Left ventricle myocardium inferior (tissue), 1 donor: ENCODE measurements at regions of chr17 and their contacts with region 1.

Region 1: DNA sequence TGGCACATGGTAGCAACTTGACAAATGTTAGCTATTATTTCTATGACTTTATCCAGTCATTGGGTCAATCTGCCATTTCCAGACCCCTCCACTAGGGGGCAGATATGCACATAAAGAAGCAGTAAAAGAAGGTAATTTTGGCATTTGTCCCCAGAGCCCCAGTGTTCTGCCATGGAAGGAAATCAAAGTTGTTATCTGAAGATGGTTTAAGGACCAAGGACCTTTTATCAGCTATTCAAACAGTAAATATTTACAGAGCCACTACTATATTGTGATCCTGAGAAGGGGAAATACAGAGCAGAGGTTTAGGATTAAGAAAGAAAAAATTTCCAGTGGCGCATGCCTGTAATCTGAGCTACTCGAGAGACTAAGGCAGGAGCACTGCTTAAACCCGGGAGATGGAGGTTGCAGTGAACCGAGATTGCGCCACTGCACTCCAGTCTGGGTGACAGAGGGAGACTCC is 20.0 kb downstream of the TRAF4 start:
- DNase-seq: peak; percentile 60
- H3K4me3 ChIP-seq: no peak overlapping the region
- H3K27ac ChIP-seq: no peak overlapping the region
- H3K4me1 ChIP-seq: peaks cover 29% of the 10 kb centered on the region
- H3K27me3 ChIP-seq: no peaks in the 10 kb centered on the region
- CTCF ChIP-seq: peak; percentile 89

Region 2: DNA sequence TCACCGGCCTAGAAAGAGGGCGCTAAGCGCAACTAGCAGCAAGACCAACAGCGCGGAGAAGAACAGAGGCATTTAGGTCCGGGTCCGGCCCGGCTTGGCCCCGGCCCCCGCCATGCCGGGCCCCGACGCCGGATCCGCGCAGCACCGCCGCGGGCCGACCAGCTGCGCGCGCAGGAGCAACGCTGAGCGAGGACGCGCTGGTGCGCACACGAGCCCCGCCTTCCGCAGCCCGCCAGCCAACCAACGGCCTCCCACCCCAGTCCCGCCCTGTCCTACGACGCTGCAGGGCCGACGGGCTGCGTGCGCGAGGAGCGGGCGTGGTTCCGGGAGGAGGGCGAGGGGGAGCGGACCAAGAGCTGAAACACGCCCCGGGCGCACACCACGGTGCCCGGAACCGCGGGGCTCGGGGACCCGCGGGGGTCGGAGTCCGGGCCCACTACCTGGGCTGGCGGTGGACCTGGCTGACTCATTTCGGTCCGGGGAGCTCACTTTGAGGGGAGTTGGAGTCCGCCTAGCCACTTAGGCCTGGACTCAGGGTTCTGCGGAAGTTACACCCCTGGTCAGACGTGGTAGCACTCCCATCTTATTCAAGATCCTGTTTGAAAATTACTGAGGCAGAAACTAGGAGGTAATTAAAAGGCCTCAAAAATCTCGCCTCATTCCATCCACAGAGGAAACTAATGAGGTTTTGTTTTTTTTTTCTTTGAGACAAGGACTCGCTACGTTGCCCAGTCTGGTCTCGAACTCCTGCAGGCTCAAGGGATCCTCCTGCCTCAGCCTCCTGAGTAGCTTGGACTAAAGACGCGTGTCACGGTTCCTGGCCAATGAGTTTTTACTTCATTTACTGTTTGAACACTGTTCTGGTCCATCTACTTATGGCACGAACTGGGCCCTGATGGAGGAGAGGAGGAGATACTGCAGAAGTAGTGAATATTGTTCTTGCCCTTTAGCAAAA is 118.6 kb before region 1 on chr17 and contains the start of gene BLTP2:
- intact Hi-C with region 1: no loop called
- DNase-seq: peak; percentile 97
- H3K4me3 ChIP-seq: peak within 1 kb of the TSS; percentile 87
- H3K27ac ChIP-seq: peak within 1 kb of the TSS; percentile 97
- H3K4me1 ChIP-seq: peaks cover 68% of the 10 kb centered on the region
- H3K27me3 ChIP-seq: no peaks in the 10 kb centered on the region
- CTCF ChIP-seq: no peak
- total RNA-seq, gene BLTP2: 71.3 TPM

Region 3: DNA sequence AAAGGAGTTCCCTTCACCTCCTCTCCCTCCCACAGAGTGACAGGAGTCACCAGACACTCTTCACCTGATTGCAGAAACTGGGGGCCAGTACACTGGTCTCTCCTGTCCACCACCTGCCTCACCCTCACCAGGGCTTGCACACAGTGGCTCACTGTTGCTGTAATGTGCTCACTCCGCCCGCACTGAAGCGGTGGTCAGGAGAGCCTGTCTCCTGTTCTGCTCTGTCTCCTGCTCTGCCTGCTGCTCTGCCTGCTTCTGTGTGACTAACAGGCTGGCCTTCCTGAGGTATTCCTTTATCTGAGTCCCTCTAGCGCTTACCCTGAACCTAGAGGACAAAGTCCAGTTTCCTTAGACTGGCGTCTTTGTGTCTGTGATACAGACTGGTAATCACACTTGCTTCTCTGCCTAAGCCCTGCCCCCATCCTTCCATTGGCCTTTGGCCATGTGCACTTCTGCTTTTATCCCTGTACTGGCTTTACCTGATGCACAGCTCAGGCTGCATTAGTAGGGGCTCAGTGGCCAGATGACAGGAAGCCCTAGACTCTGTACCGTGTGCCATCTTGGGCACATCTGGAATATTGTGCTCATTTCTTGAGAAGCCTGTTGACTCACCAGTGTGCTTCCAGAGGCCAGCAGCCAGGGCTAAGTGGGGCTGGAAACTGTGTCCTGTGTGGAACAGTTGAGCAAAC is 65.4 kb before region 1 on chr17:
- intact Hi-C with region 1: no loop called
- DNase-seq: no peak
- H3K4me3 ChIP-seq: no peak overlapping the region
- H3K27ac ChIP-seq: no peak overlapping the region
- H3K4me1 ChIP-seq: no peaks in the 10 kb centered on the region
- H3K27me3 ChIP-seq: no peaks in the 10 kb centered on the region
- CTCF ChIP-seq: no peak

Region 4: DNA sequence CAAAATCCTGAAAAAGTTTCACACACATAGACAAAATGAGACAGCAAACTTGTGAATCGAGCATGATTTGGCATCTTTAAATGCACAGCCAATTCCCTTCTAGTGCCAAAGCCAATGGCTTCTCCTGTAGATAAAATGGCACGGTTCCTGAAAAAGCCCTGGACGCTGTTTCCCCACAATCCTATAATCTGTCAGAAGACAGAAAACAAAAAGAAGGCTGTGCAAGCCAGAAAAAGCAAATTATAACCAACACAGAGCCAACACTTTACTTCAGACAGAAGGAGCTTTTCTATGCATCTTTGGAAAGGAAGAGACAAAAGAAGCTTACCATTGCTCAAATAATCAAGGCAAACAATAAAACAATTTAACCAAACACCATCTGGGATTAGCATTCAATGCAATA is 55.0 kb after region 1 on chr17:
- intact Hi-C with region 1: no loop called
- DNase-seq: no peak
- H3K4me3 ChIP-seq: no peak overlapping the region
- H3K27ac ChIP-seq: no peak overlapping the region
- H3K4me1 ChIP-seq: no peaks in the 10 kb centered on the region
- H3K27me3 ChIP-seq: no peaks in the 10 kb centered on the region
- CTCF ChIP-seq: no peak

Region 5: GRCh38 chr17:28839221-28839620 is 75.4 kb after region 1 on chr17:
- intact Hi-C with region 1: loop called (anchors 10 kb)
- DNase-seq: no peak
- H3K4me3 ChIP-seq: no peak overlapping the region
- H3K27ac ChIP-seq: no peak overlapping the region
- H3K4me1 ChIP-seq: peaks cover 24% of the 10 kb centered on the region
- H3K27me3 ChIP-seq: no peaks in the 10 kb centered on the region
- CTCF ChIP-seq: no peak

Region 6: DNA sequence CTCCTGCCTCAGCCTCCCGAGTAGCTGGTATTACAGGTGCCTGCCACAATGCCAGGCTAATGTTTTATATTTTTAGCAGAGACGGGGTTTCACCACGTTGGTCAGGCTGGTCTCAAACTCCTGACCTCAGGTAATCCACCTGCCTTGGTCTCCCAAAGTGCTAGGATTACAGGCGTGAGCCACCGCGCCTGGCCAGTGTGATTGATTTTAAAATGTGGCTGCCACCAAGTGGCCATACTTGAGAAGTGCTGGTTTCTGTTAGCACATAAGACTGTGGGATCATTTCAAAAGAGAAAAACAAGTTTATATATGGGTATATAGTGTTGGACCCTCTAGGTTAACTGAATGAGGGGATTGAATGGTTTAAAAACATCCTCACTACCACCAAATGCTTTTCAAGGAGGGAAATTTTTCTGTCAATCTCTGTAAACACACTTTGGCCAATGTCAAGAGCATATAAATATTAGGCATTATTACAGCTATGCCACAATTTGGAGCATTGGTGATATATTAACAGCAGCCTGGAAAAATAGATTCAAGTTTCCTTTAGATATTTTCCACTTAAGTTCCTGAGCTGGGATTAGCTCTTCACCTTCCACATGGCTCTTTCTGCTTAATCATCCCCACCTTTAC is 152.6 kb after region 1 on chr17:
- intact Hi-C with region 1: loop called (anchors 10 kb)
- DNase-seq: no peak
- H3K4me3 ChIP-seq: no peak overlapping the region
- H3K27ac ChIP-seq: no peak overlapping the region
- H3K4me1 ChIP-seq: peaks cover 20% of the 10 kb centered on the region
- H3K27me3 ChIP-seq: no peaks in the 10 kb centered on the region
- CTCF ChIP-seq: peak; percentile 77

Region 7: DNA sequence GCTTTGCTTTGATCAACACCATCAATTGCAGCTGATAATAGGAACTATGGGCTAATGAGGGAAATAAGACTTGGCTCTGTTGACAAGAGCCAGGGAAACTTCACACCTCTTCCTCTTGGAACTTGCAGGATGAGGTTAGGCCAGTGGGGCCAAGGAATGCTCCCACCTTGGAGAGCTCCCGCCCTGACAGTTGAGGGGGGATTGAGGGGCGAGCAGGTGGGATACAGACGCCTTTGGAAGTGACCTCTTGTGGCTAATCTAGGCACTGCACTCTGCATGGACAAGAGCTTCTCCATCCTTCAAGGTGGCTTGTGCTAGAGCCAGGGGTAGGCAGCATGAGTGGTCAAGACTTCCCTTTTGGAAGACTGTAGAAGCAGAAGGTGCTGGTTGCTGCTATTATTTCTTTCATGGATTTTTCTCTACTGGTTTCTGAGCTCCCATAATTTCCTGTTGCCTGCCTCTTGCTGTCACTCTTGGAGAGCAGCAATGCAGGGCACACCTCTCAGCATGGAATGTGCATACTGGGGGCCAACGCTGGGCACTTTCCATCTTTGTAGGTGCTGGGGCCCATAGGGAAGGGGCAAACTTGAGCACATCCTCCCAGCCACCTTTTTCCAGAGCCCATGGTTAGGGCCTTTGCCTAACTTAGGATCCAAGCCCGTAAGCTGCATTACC is 189.7 kb after region 1 on chr17:
- intact Hi-C with region 1: no loop called
- DNase-seq: no peak
- H3K4me3 ChIP-seq: no peak overlapping the region
- H3K27ac ChIP-seq: peak overlapping the region; percentile 100
- H3K4me1 ChIP-seq: peaks cover 41% of the 10 kb centered on the region
- H3K27me3 ChIP-seq: no peaks in the 10 kb centered on the region
- CTCF ChIP-seq: peak; percentile 92